Dendritic cell treated with granulocyte-macrophage colony-stimulating factor and Interleukin-4, amounts not matched to agents 40 ng/mL and 50 ng/mL, for 4 days (primary cell): ENCODE measurements at regions of chr14 and their contacts with region 1.

Region 1: DNA sequence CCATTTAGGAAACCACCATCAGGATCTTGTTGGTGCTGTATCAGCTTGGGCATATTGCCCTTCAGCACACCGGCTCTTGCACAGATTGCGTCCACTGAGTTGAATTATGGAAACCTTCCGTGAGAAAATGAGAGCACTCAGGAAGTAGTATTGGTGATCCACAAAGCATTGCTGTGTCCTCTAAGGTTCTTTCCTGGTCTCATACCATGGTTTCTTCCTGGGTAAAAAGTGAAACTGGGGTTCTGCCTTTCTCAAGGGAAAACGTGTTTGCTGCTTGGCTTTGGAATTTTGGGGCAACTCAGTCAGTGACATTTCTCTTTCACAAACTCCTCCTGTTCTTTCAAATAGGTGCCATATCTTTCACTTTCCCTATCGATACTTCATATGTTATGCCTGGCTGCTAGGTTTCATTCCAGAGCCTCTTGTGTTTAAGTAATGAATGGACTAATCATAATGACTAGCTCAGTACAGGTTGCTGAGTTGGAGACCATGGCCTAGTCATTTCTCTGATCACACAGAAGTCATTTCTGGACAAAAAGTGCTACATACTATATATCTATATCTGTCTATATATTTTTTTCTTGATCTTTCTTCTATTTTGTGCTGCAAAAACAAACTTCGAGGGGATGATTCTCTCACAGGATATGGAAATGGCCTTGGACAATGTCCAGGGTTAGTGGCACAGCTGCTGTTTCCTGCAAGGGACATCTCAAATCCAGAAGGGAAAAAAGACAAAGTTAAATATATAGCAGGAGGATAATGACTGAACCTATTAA is 423.4 kb downstream of the ZFP36L1 start:
- H3K4me3 Mint-ChIP-seq: no peak overlapping the region
- H3K27ac Mint-ChIP-seq: no peak overlapping the region
- H3K4me1 Mint-ChIP-seq: peaks cover 56% of the 10 kb centered on the region
- H3K27me3 Mint-ChIP-seq: no peaks in the 10 kb centered on the region

Region 2: GRCh38 chr14:68401855-68402254 is 32.4 kb after region 1 on chr14:
- intact Hi-C with region 1: loop called (anchors 5 kb)
- H3K4me3 Mint-ChIP-seq: no peak overlapping the region
- H3K27ac Mint-ChIP-seq: no peak overlapping the region
- H3K4me1 Mint-ChIP-seq: peaks cover 37% of the 10 kb centered on the region
- H3K27me3 Mint-ChIP-seq: no peaks in the 10 kb centered on the region